ENCODE measurements at regions of chr2 and their contacts with region 1.

Region 1: GRCh38 chr2:79025421-79025820 is at the start of gene REG3G:
- DNase-seq: no peak
- ATAC-seq: no peak
- H3K4me3 ChIP-seq: no peak within 1 kb of the TSS
- H3K4me3 Mint-ChIP-seq: no peak within 1 kb of the TSS
- H3K27ac ChIP-seq: no peak within 1 kb of the TSS
- H3K27ac Mint-ChIP-seq: no peak within 1 kb of the TSS
- H3K4me1 ChIP-seq: no peaks in the 10 kb centered on the region
- H3K4me1 Mint-ChIP-seq: no peaks in the 10 kb centered on the region
- H3K27me3 ChIP-seq: no peaks in the 10 kb centered on the region
- H3K27me3 Mint-ChIP-seq: no peaks in the 10 kb centered on the region
- CTCF ChIP-seq: no peak
- total RNA-seq, gene REG3G: not detected

Region 2: GRCh38 chr2:79159030-79159429 is 133.6 kb after region 1 on chr2:
- CTCF ChIA-PET with region 1: no interaction called
- POLR2A ChIA-PET with region 1: no interaction called
- intact Hi-C with region 1: loop called in 1 of 2 experiments (anchors 2 kb)
- DNase-seq: no peak
- ATAC-seq: no peak
- H3K4me3 ChIP-seq: no peak overlapping the region
- H3K4me3 Mint-ChIP-seq: no peak overlapping the region
- H3K27ac ChIP-seq: no peak overlapping the region
- H3K27ac Mint-ChIP-seq: no peak overlapping the region
- H3K4me1 ChIP-seq: no peaks in the 10 kb centered on the region
- H3K4me1 Mint-ChIP-seq: no peaks in the 10 kb centered on the region
- H3K27me3 ChIP-seq: no peaks in the 10 kb centered on the region
- H3K27me3 Mint-ChIP-seq: no peaks in the 10 kb centered on the region
- CTCF ChIP-seq: no peak

Measured in CD8-positive, alpha-beta T cell (primary cell).